Right ventricle myocardium inferior (tissue), 1 donor: ENCODE measurements at regions of chr21 and their contacts with region 1.

Region 1: DNA sequence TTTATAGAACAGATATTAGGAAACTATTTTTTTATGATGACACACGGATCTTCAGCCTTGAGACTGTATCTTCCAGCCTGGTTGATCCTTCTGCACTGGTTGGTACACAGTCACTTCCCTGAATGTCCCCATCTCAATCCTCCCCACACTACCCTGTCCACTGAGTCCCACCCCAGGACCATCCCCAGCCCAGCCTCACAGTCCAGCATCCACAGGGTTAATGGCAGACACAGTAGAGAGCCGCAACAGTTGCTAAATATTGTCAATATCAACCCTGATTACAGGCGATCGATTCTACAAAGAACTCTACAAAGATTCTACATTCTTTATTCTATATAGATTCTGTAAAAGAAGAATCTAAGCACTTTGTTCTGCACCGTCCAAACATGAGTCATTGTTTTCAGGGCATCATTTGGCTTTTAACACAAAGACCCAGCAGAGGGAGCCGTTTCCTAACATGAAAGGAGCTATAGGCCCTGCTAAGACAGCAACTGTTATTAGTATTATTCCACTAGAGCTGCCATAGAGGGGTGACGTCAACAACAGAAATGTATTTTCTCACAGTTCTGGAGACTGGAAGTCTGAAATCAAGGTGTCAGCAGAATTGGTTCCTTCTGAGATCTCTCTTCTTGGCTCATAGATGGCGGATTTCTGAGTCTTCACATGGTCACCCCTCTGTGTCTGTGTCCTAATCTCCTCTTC is 30.1 kb upstream of the IFNAR2 start:
- DNase-seq: no peak
- ATAC-seq: peak; percentile 80

Region 2: DNA sequence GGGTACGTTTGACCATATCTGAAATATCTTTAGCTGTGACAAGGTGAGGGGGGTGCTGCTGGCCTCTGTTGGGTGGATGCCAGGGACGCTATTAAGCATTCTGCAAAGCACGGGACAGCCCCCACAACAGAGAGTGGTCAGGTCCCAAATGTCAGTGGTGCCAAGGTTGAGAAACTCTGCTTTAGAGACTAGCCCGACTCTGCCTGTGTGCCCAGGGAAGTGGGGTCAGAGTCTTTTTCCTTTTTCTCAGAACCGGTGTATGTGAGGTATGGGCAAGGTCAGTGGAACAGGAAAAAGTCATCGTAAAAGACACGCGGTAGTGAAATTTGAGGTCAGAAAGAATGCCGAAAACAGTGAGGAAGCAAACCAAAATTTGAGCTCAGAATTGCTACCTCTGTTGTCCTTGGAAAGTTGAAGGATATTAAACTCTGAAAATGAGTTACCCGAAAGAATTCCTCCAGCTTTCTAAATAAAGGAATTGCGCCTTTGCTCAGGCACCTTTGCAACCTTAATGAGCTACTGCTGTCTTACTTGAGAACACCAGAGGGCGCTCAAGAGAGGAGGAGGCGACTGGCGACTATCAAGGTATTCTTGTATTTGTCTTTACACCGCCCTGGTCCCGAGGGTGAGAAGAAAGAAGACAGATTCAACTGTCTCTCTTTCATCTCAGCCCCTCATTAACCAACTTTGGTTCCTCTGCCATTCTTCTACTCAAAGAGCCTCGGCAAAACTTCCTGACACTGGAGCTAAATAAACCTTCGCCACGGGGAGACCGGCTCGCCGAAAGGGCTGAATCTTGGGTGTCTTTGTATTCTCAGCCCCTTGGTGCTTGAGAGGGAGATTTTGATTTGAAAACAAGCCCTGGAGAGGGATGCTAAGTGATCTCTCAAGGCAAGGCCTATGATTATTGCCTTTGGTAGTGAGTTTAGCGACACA is 259.3 kb before region 1 on chr21:
- intact Hi-C with region 1: loop called (anchors 2 kb)
- DNase-seq: peak; percentile 69
- ATAC-seq: no peak

Region 3: GRCh38 chr21:33127154-33127893 is 72.3 kb before region 1 on chr21:
- intact Hi-C with region 1: loop called (anchors 5 kb)
- DNase-seq: no peak
- ATAC-seq: peak; percentile 88

Region 4: DNA sequence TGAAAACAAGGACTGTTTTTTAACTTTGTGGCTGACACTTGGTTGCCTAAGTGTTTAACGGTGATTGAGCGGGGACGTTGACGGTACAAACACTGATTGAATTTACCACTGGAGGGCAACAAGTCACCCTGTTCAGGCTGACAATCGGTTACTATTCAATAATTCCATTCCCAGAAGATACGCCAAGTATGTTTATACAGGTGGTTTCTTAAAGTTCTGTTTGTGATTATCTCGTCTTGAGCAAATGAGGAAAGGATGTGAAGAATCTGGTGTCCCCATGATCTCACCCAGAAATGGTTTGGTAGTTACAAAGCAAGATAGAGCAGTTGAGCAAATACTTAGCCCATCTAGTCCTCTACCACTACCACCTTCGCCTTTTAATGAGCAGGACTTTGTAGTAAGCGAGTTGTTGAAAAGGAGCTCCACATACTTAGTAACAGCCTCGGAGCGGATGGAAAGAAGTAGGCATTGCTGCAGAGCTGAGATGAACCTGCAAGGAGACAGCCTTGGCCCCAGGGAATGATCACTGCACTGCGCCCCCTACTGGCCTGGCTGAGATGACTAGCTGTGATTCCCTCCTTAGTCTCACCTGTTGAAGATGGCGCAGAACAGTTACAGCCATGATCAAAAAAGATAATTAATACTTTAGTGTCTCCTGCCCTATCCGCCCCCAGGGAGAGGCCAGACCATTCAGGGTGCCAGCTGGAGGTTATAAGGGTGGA is 161.4 kb after region 1 on chr21:
- intact Hi-C with region 1: loop called (anchors 5 kb)
- DNase-seq: peak; percentile 77
- ATAC-seq: peak; percentile 79

Region 5: DNA sequence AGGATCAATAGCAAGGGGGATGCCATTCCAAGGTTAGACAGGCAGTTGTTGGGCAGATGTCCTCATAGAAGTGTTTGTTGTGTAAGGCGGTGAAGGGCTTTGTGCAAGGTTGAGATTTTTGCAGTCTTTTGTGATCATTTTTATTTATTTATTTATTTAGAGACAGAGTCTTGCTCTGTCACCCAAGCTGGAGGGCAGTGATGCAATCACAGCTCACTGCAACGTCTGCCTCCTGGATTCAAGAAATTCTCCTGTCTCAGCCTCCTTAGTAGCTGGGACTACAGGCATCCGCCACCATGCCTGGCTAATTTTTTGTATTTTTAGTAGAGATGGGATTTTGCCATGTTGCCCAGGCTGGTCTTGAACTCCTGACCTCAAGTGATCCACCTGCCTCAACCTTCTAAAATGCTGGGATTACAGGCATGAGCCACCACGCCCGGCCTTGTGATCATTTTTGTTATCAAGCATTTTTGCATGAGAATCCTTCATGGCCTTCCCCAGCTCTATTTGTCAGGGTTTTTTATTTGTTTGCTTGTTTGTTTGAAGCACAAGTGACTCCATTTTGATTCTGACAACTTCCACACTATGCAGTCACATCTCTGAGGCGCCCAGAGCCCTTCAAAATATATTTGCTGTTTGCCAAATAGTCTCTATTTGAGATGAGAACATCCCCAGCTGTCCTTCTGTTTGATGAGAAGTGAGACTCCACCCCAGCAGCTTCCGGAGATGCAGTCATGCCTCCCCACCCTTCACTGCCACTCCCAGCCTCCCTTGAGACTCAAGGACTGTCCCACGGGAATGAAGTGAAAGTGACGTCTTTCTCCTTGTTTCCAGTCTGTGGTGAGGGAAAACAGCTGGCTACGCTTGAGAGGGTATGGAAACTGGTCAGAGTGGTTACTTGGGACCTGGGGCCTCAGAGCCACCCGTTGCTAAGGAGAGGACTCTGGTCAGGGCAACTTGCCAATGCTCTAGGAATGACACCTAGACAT is 242.1 kb after region 1 on chr21:
- intact Hi-C with region 1: loop called (anchors 1 kb)
- DNase-seq: no peak
- ATAC-seq: peak; percentile 67